ENCODE measurements at regions of chr2 and their contacts with region 1.

Region 1: DNA sequence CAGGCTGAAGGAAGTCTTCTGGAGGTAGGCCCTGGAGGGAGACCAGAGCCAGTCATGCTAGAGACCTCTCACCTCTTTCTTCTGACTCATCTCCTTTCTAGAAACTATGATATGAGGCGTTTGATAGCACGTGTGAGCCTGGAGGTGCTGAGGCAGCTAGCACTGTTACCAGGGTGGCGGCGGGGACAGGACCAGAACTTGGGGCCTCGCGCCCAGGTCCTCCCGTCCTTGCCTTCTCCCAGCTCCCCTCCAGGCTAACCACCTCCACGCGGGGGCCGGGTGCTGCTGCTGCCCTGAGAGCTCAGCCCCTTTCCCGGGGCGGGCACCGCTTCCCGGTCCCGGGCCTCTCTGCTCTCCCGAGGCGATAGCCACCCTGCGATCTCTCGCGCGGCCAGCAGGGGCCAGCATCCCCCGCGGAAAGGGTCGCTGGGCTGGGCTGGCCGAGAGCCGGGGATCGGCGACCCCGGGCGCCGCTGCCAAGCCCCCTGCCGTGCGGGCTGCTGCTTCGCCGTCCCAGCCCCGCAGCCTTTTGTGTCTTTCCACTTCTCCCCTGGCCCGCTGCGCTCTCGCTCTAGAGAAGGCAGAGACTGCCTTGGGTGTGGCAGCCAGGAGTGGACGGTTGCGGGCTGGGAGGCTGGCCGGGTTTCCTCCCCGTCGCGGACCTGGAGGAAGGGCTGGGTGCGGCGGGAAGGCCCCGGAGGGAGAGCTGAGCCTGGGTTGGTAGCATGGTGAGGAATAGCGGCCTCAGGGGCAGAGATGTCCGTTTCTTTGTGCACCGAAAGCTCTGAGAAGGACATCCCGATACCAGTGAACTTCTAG is 49.1 kb downstream of the TMEM17 start:
- DNase-seq: peak; percentile 45
- H3K4me3 Mint-ChIP-seq: peak overlapping the region; percentile 19
- H3K27ac Mint-ChIP-seq: no peak overlapping the region
- H3K4me1 Mint-ChIP-seq: no peaks in the 10 kb centered on the region
- H3K27me3 Mint-ChIP-seq: peaks cover 3% of the 10 kb centered on the region

Region 2: GRCh38 chr2:62774555-62775366 is 317.8 kb after region 1 on chr2:
- intact Hi-C with region 1: loop called (anchors 1 kb)
- DNase-seq: no peak
- H3K4me3 Mint-ChIP-seq: no peak overlapping the region
- H3K27ac Mint-ChIP-seq: no peak overlapping the region
- H3K4me1 Mint-ChIP-seq: no peaks in the 10 kb centered on the region
- H3K27me3 Mint-ChIP-seq: no peaks in the 10 kb centered on the region

Region 3: GRCh38 chr2:63023444-63023843 is 566.5 kb after region 1 on chr2:
- intact Hi-C with region 1: loop called (anchors 10 kb)
- DNase-seq: no peak
- H3K4me3 Mint-ChIP-seq: no peak overlapping the region
- H3K27ac Mint-ChIP-seq: no peak overlapping the region
- H3K4me1 Mint-ChIP-seq: no peaks in the 10 kb centered on the region
- H3K27me3 Mint-ChIP-seq: no peaks in the 10 kb centered on the region

Region 4: GRCh38 chr2:63424329-63425078 is 967.6 kb after region 1 on chr2:
- intact Hi-C with region 1: loop called (anchors 2 kb)
- DNase-seq: no peak
- H3K4me3 Mint-ChIP-seq: no peak overlapping the region
- H3K27ac Mint-ChIP-seq: no peak overlapping the region
- H3K4me1 Mint-ChIP-seq: peaks cover 5% of the 10 kb centered on the region
- H3K27me3 Mint-ChIP-seq: no peaks in the 10 kb centered on the region

Region 5: DNA sequence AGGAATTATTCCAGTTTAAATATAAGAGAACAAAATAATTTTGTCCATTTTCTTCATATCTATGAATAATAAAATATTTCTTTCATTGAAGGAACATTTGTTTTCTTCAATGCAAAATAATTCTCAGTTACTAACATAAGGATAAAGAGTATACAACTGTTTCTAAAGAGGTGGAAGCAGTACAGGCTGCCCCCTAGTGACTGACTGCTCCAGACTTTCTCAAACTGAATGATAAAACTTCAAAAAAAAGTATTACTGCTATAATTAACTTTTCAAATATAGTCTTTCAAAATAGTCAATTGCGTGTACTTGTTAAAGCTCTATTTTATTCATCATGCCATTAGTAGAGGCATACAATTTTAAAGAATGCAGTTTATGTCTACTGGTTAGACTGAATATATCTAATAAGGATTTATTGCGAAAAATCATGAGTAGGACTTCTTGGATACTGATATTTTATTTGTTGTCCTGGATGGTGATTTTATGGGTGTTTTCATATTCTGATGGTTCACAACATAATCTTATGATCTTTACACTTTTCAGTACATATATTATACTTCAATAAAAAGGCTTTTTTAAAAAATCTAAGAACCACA is 1031.3 kb after region 1 on chr2:
- intact Hi-C with region 1: loop called (anchors 10 kb)
- DNase-seq: no peak
- H3K4me3 Mint-ChIP-seq: no peak overlapping the region
- H3K27ac Mint-ChIP-seq: no peak overlapping the region
- H3K4me1 Mint-ChIP-seq: no peaks in the 10 kb centered on the region
- H3K27me3 Mint-ChIP-seq: no peaks in the 10 kb centered on the region

Region 6: DNA sequence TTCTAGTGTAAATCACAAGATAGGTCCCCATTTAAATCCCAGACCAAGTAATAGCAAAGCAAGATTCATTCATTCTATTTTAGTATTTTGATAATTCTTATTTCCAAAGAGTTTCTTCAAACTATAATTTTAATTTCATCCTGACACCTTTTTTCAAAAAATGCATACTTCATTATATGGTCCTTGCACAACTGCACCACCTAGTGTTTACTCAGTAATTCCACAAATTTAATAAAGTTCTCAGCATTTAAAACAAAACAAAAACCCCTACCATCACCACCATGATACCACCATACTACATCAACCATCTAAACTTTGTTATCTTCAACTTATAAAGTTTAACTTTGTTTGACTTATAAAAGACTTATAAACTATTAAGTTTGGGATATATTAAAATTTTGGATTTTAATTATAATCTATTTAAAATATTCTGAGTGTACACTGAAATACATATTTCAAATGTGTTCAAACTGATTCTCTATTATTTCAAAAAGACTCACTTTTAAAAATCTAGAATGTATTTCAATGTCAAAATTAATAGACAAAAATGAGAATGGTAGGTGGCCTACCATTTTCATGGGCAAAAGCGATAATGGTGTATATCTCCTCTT is 1087.2 kb after region 1 on chr2:
- intact Hi-C with region 1: loop called (anchors 5 kb)
- DNase-seq: no peak
- H3K4me3 Mint-ChIP-seq: no peak overlapping the region
- H3K27ac Mint-ChIP-seq: no peak overlapping the region
- H3K4me1 Mint-ChIP-seq: no peaks in the 10 kb centered on the region
- H3K27me3 Mint-ChIP-seq: no peaks in the 10 kb centered on the region